Mucosa of descending colon (tissue), 3 donors: ENCODE measurements at regions of chr21 and their contacts with region 1.

Region 1: DNA sequence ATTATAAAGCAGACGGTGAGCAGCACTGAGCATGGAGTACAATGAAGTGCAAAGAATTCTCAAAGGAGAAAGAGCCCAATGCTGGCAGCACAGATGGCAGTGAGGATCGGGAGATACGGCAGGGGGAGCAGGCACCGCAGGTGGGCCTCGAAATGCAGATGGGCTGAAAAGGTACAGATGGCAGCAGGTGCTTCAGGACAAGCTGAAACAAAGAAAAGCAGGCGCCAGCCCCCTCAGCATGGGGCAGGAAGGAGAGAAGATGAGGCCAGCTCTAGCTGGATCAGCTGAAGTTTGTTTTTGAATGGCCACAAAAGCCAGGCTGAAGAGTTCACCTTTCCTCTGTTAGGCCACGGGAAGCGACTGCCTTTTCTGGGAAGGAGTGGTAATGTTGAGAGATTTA is 7.7 kb downstream of the CFAP298 start:
- DNase-seq: no peak
- ATAC-seq: no peak
- H3K4me3 ChIP-seq: no peak overlapping the region
- H3K4me1 ChIP-seq: no peaks in the 10 kb centered on the region
- CTCF ChIP-seq: no peak

Region 2: DNA sequence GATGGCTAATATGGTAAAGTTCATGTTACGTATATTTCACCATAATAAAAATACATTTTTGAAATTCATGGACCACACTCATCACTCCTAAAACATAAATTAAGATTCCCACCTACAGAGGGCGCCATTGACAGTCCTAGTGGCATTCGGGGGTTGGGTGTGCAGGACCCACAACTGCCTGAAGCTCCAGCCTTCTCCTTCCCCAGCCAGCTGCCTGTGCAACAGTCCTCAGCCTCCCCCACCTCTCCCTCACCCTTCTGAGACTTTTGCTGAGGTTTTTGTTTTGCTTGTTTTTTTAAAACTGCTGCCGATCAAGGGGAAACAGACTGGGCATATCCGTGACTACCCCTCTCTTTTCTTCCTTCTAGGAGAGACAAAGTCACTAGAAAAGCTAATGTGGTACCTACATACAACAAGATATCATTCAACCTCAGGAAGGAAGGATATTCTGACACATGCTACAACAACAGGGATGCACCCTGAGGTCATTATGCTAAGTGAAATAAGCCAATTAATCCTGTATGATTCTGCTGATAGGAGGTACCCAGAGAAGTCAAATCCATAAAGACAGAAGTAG is 201.2 kb before region 1 on chr21:
- intact Hi-C with region 1: loop called in 1 of 2 experiments (anchors 10 kb)
- DNase-seq: peak in 1 of 3 donors; percentile 86
- ATAC-seq: peak; percentile 78
- H3K4me3 ChIP-seq: no peak overlapping the region
- H3K4me1 ChIP-seq: no peaks in the 10 kb centered on the region
- CTCF ChIP-seq: no peak

Region 3: DNA sequence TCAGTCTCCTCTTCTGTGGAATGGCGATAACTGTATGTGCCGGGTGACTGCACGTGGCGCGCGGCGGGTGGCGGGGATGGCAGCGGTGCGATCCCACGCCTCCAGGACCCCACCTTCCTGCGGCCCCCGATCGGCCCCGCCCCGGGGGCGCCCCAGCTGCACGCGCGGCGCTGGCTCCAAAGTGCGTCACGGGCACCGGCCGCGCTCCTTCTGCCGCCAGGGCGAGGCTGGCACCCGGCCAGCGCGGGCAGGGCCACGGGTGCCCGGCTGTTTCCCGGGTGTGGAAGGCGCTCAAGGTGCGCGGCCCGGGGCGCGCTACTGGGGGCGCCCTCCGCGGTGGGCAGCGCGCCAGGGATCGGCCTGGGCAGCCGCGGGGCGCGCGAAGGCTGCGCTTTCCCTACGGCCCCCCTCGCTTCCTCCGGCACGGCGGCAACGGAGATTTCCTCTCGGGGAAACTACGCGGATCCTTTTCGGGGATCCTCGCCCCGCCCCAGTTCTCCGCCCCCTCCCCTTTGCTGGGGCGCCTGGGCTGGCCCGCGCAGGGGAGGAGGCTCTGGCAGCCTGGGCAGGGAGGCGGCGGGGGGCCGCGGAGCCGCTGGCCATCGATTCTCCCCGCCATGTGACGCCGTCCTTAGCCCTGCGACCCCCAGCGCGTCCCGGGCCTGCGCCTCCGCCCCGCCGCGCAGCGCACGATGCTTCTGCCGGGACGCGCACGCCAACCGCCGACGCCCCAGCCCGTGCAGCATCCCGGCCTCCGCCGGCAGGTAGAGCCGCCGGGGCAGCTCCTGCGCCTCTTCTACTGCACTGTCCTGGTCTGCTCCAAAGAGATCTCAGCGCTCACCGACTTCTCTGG is 192.1 kb before region 1 on chr21 and contains the start of gene EVA1C:
- intact Hi-C with region 1: loop called (anchors 10 kb)
- DNase-seq: peak; percentile 68 to 86 (median 81)
- ATAC-seq: peak; percentile 75
- H3K4me3 ChIP-seq: peak within 1 kb of the TSS; percentile 23
- H3K4me1 ChIP-seq: peaks cover 21% of the 10 kb centered on the region
- CTCF ChIP-seq: no peak
- total RNA-seq, gene EVA1C: 13.7 to 27.8 (median 15.3) TPM